ENCODE measurements at regions of chrX and their contacts with region 1.

Region 1: DNA sequence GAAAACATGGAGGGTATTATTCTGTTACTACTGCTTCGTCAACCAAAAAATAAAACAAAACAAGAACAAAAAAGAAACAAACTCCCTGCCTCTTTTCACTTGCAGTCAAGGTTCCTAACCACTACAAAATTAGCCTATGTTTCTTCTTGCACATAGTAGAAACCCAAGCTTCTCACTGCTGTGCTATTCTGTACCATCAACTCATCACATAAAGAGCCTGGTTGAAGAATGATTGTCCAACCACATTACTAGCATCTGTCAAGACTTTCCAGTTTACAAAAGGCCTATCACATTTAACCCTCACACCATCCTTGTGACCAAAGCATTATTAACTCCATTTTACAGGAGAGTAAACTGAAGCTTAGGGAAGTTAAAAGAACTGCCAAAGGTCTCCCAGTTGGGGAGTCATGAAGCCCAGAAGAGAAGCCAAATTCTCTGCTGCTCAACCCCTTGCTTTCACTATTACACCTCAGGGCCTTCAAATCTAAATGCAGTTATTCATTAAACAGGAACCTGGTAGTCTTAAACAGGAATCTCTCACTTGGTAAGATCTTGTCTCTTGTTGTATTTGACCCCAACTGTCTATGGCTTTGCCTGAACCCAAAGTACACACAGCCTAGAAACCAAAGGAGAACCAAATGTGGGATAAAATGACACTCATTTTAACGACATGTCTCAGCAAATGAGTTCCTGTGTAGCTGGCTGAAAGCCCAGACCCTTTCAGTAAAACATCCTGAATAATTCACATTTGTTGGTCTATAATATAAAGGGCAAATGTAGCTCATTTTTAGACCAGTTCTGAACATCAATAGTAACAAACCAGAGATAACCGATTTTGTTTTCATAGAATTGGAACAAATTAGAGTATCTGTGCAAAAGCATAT is 8.6 kb downstream of the F9 start:
- DNase-seq: no peak
- H3K4me3 ChIP-seq: no peak overlapping the region
- CTCF ChIP-seq: no peak
- POLR2A ChIP-seq: no peak

Region 2: DNA sequence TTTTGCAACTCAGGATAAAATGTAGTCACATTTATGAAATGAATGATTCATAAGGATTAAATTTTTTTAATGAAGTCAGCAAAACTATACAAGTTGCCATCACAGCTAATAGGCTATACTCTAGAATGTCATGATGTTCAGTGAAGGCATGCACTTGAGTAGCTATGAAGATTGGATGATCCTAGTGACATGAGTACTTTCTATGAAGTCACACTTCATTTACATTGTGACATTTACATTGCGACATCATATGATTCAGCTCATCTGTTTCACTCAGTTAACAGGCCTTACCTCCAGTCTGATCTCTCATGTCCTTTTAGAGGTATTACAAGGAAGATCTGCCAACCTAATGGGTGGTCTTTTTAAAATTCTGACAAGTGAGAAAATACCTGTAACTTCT is 744.9 kb before region 1 on chrX:
- intact Hi-C with region 1: no loop called
- DNase-seq: no peak
- H3K4me3 ChIP-seq: no peak overlapping the region
- CTCF ChIP-seq: no peak
- POLR2A ChIP-seq: no peak

Region 3: DNA sequence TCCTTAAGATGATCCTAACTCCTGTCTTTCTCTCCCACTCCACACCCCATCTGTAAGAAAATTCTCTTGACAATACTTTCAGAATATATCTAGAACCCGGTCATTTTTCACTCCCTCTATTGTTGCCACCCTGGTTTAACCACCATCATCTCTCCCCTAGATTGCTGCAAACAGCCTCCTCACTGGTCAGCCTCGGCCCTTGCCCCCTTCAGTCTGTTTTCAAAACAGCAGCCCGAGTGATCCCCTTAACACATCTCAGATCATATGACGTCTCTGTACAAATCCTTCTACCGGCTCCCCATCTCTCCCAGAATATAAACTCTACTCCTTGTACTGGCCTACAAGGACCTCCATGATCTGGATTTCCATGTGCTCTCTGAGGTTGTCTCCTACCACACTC is 43.8 kb before region 1 on chrX:
- intact Hi-C with region 1: no loop called
- DNase-seq: no peak
- H3K4me3 ChIP-seq: no peak overlapping the region
- CTCF ChIP-seq: no peak
- POLR2A ChIP-seq: no peak

Region 4: DNA sequence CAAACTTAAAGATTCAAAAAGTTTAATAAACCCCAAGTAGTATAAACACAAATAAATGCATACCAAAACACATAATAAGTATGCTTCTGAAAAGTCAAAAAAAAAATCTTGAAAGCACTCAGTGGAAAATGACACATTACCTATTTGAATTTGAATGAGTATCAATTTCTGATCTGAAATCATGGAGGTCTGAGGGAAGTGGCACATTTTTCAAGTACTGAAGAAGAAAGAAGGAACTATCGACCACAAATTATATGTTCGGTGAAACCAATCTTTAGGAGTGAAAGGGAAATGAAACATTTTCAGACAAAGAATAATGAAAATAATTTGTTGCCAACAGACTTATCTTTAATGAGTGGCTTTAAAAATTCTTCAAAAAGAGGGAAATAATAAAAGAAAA is 20.7 kb before region 1 on chrX:
- intact Hi-C with region 1: loop called (anchors 1 kb)
- DNase-seq: no peak
- H3K4me3 ChIP-seq: no peak overlapping the region
- CTCF ChIP-seq: no peak
- POLR2A ChIP-seq: no peak

Measured in lower leg skin (tissue), 4 donors.